Activated naive CD4-positive, alpha-beta T cell treated with anti-CD3 and anti-CD28 coated beads for 36 hours (primary cell): ENCODE measurements at regions of chr12 and their contacts with region 1.

Region 1: GRCh38 chr12:66860752-66861750 is 182.2 kb upstream of the GRIP1 start:
- DNase-seq: peak; percentile 82
- H3K4me3 Mint-ChIP-seq: no peak overlapping the region
- H3K27ac Mint-ChIP-seq: no peak overlapping the region
- H3K4me1 Mint-ChIP-seq: peaks cover 20% of the 10 kb centered on the region
- H3K27me3 Mint-ChIP-seq: no peaks in the 10 kb centered on the region

Region 2: GRCh38 chr12:66144791-66145754 is 716.0 kb before region 1 on chr12:
- CTCF ChIA-PET with region 1: no interaction called
- intact Hi-C with region 1: loop called (anchors 5 kb)
- DNase-seq: peak; percentile 49
- H3K4me3 Mint-ChIP-seq: no peak overlapping the region
- H3K27ac Mint-ChIP-seq: peak overlapping the region; percentile 86
- H3K4me1 Mint-ChIP-seq: peaks cover 16% of the 10 kb centered on the region
- H3K27me3 Mint-ChIP-seq: no peaks in the 10 kb centered on the region

Region 3: DNA sequence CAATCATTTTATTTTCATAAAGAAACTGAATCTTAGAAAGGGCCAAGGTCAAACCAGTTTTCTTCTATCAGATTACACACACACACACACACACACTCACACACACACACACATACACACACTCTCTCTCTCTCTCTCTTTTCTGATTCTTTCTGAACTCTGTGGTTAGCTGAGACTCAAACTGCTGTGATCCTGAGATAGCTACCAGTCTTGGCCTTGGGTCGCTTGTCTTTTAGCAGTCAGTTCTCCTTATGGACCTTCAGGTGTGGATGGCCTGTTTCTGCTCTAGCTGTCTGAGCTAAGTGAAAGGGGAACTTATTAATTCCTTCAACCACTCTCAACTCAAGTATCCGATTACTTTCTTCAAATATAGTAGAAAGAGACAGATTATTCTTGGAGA is 327.3 kb before region 1 on chr12:
- CTCF ChIA-PET with region 1: no interaction called
- intact Hi-C with region 1: no loop called
- DNase-seq: no peak
- H3K4me3 Mint-ChIP-seq: no peak overlapping the region
- H3K27ac Mint-ChIP-seq: no peak overlapping the region
- H3K4me1 Mint-ChIP-seq: no peaks in the 10 kb centered on the region
- H3K27me3 Mint-ChIP-seq: no peaks in the 10 kb centered on the region

Region 4: GRCh38 chr12:66688846-66689439 is 172.1 kb before region 1 on chr12:
- CTCF ChIA-PET with region 1: interaction called, 21 read pairs
- intact Hi-C with region 1: loop called (anchors 1 kb)
- DNase-seq: peak; percentile 50
- H3K4me3 Mint-ChIP-seq: no peak overlapping the region
- H3K27ac Mint-ChIP-seq: no peak overlapping the region
- H3K4me1 Mint-ChIP-seq: peaks cover 2% of the 10 kb centered on the region
- H3K27me3 Mint-ChIP-seq: no peaks in the 10 kb centered on the region

Region 5: GRCh38 chr12:66708704-66709456 is 152.2 kb before region 1 on chr12:
- CTCF ChIA-PET with region 1: interaction called, 16 read pairs
- intact Hi-C with region 1: no loop called
- DNase-seq: no peak
- H3K4me3 Mint-ChIP-seq: peak overlapping the region; percentile 32
- H3K27ac Mint-ChIP-seq: peak overlapping the region; percentile 7
- H3K4me1 Mint-ChIP-seq: peaks cover 33% of the 10 kb centered on the region
- H3K27me3 Mint-ChIP-seq: no peaks in the 10 kb centered on the region

Region 6: DNA sequence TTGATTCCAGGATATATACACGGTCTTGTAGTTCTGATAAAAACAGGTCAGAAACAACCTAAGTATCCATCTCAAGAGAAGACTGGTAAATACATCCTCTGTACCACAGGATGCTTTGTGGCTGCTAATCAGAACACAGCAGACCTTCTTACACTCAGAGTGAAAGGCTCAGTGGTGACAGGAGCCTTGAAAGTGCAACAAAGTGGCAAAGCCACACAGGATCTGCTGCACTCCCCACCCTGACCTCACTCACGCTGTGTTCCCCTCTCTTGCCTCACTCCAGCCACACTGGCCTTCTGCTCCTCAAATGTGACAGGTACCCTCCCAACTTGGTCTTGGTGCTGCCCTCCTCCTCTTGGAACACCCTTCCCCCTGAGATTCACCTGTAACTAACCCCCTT is 84.1 kb before region 1 on chr12:
- CTCF ChIA-PET with region 1: interaction called, 4 read pairs
- intact Hi-C with region 1: loop called (anchors 1 kb)
- DNase-seq: peak; percentile 72
- H3K4me3 Mint-ChIP-seq: no peak overlapping the region
- H3K27ac Mint-ChIP-seq: peak overlapping the region; percentile 10
- H3K4me1 Mint-ChIP-seq: peaks cover 15% of the 10 kb centered on the region
- H3K27me3 Mint-ChIP-seq: no peaks in the 10 kb centered on the region

Region 7: DNA sequence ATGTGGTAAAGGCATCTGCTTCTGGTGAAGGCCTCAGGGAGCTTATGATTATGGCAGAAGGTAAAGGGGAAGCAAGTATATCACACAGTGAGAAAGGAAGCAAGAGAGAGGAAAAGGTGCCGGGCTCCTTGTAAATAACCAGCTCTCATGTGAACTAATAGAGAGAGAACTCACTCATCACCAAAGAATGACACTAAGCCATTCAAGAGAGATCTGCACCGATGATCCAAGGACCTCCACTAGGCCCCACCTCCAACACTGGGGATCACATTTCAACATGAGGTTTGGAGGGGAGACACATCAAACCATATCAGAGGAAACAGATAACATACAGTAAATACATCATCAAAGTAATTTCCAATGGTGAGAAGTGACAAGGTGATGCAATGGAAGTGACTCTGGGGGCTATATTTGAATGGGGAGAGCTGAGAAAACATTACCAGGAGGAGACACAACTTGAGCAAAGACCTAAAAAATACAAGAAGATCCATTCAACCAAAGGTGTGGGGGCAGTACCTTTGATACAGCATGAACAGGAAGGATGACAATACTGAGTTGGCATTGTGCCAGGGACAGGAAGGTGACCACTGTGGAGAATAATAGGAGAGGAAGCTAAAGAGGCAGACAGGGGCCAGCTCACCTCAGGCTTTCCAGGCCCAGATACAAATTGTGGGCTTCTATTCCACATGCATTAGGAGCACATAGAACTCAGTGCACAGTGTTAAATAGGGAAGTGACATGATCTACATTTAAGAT is 47.7 kb before region 1 on chr12:
- CTCF ChIA-PET with region 1: no interaction called
- intact Hi-C with region 1: no loop called
- DNase-seq: peak; percentile 62
- H3K4me3 Mint-ChIP-seq: no peak overlapping the region
- H3K27ac Mint-ChIP-seq: no peak overlapping the region
- H3K4me1 Mint-ChIP-seq: peaks cover 11% of the 10 kb centered on the region
- H3K27me3 Mint-ChIP-seq: no peaks in the 10 kb centered on the region

Region 8: GRCh38 chr12:66929121-66929520 is 68.1 kb after region 1 on chr12:
- CTCF ChIA-PET with region 1: no interaction called
- intact Hi-C with region 1: no loop called
- DNase-seq: peak; percentile 58
- H3K4me3 Mint-ChIP-seq: no peak overlapping the region
- H3K27ac Mint-ChIP-seq: no peak overlapping the region
- H3K4me1 Mint-ChIP-seq: peaks cover 17% of the 10 kb centered on the region
- H3K27me3 Mint-ChIP-seq: no peaks in the 10 kb centered on the region